Mammary epithelial cell (primary cell): ENCODE measurements at regions of chr9 and their contacts with region 1.

Region 1: GRCh38 chr9:84697509-84698114 is 28.1 kb downstream of the NTRK2 start:
- DNase-seq: peak; percentile 51
- H3K4me3 ChIP-seq: no peak overlapping the region
- H3K27ac ChIP-seq: no peak overlapping the region
- H3K4me1 ChIP-seq: peaks cover 4% of the 10 kb centered on the region
- H3K27me3 ChIP-seq: peaks cover 1% of the 10 kb centered on the region
- CTCF ChIP-seq: peak; percentile 78 to 94

Region 2: DNA sequence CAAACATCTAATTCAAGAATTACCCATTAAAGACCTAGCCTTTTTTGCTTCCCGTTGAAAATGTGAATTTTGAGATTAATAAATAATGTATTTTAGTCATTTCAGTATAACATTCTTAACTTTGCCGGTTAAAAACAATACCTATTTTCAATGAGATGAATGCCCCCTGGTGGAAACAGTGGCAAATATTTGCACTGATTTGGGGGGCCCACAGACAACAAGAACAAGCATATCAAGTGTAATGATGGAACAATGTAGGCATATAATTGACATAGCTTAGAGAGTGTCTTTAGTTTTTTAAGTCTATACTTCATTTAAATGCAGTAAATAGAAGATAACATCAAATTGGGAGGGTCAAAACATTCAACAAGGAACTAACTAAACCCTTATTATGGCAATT is 83.8 kb after region 1 on chr9:
- CTCF ChIA-PET with region 1: interaction called, 10 read pairs
- dilution Hi-C with region 1: loop called (anchors 5 kb)
- in situ Hi-C with region 1: loop called in 1 of 2 experiments (anchors 5 kb)
- intact Hi-C with region 1: loop called (anchors 1 kb)
- DNase-seq: peak; percentile 13
- H3K4me3 ChIP-seq: no peak overlapping the region
- H3K27ac ChIP-seq: no peak overlapping the region
- H3K4me1 ChIP-seq: no peaks in the 10 kb centered on the region
- H3K27me3 ChIP-seq: no peaks in the 10 kb centered on the region
- CTCF ChIP-seq: peak; percentile 55

Region 3: GRCh38 chr9:84947363-84947972 is 249.9 kb after region 1 on chr9:
- CTCF ChIA-PET with region 1: no interaction called
- dilution Hi-C with region 1: no loop called
- in situ Hi-C with region 1: loop called (anchors 5 to 10 kb)
- intact Hi-C with region 1: no loop called
- DNase-seq: peak; percentile 81
- H3K4me3 ChIP-seq: no peak overlapping the region
- H3K27ac ChIP-seq: peak overlapping the region; percentile 38
- H3K4me1 ChIP-seq: peaks cover 17% of the 10 kb centered on the region
- H3K27me3 ChIP-seq: no peaks in the 10 kb centered on the region
- CTCF ChIP-seq: no peak

Region 4: DNA sequence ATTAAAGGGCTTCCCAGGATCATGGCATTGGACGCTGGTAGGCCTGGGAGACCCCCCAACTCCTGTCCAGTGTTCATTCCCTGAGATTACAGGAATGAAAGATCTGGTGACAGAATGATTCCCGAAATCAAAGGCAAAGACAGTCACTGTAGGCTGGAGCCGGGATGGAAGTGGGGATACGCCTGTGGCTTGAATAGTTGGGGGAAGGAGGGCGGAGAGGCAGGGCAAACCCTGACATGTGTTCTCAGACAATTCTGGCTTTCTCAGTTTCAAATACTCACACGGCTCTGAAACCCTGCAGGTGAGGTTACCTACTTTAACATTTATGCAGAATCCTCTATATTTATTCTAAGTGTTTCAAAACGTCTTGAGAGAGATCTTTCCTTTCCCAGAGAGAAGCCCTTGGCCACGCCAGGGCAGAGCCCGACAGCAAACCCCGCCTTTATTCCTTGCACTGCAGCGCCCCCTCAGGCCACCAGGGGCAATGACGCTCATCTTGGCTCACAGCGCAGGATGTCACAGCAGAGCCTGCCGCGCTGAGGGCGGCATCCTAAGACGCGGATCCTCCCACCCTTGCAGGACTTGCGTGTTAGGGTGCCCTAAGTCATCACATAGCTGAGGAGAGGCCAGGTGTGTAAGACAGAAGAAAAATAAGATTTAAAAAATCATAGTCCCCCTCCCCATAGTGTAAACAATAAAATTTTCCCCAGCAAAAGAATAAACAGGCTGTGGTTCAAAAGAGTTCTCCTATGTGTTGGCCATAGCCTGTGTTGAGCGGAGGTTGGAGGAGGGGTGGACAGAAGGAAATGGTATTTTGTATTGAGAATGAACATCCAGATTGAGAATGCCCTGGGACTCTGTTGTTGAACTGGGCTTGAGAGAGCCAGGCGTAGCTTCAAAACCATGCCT is 256.4 kb after region 1 on chr9:
- CTCF ChIA-PET with region 1: no interaction called
- dilution Hi-C with region 1: no loop called
- in situ Hi-C with region 1: loop called (anchors 5 to 10 kb)
- intact Hi-C with region 1: loop called (anchors 1 kb)
- DNase-seq: peak; percentile 73
- H3K4me3 ChIP-seq: no peak overlapping the region
- H3K27ac ChIP-seq: peak overlapping the region; percentile 67
- H3K4me1 ChIP-seq: peaks cover 14% of the 10 kb centered on the region
- H3K27me3 ChIP-seq: no peaks in the 10 kb centered on the region
- CTCF ChIP-seq: peak; percentile 99

Region 5: DNA sequence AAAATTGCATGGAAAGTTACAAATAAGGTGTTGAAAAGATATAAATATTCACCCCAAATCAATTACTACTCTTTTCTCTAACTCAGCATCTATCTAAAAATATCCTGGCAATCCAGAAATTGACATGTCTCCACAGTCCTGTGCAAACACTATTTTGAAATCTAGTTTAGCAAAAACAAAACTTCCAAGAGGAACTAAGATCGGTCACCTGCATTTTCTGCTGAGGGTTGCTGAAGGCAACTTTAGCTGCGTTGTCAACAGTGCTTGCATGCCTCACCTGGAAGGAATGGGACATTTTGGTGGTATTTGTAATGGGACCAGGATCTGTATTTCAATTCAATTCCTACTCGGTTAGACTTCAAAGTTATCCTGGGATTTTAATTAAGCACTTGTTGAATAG is 370.2 kb after region 1 on chr9:
- CTCF ChIA-PET with region 1: no interaction called
- dilution Hi-C with region 1: no loop called
- in situ Hi-C with region 1: no loop called
- intact Hi-C with region 1: loop called (anchors 2 kb)
- DNase-seq: no peak
- H3K4me3 ChIP-seq: no peak overlapping the region
- H3K27ac ChIP-seq: no peak overlapping the region
- H3K4me1 ChIP-seq: no peaks in the 10 kb centered on the region
- H3K27me3 ChIP-seq: no peaks in the 10 kb centered on the region
- CTCF ChIP-seq: no peak

Region 6: DNA sequence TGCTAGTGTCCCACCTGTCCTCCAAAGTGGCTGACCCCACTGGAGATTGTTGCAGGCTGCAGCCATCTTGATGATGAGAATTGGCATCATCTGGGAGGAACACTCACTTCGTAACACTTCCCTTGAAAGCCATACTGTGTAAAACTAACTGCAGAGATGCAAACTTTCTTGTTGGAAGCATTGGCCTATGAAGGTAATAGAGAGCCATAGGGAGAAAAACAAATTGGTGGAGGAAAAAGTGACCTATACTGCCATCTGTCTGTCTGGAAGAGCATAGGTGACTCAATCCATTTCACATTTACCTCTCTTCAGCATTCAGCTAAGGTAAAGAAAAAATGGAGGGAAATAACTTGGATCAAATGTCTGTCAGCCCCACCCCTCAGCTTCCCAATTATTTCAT is 445.4 kb after region 1 on chr9:
- CTCF ChIA-PET with region 1: no interaction called
- dilution Hi-C with region 1: no loop called
- in situ Hi-C with region 1: loop called in 1 of 2 experiments (anchors 25 kb)
- intact Hi-C with region 1: loop called (anchors 1 kb)
- DNase-seq: peak; percentile 28
- H3K4me3 ChIP-seq: no peak overlapping the region
- H3K27ac ChIP-seq: no peak overlapping the region
- H3K4me1 ChIP-seq: no peaks in the 10 kb centered on the region
- H3K27me3 ChIP-seq: no peaks in the 10 kb centered on the region
- CTCF ChIP-seq: peak; percentile 69 to 70

Region 7: GRCh38 chr9:85425153-85425611 is 727.6 kb after region 1 on chr9:
- CTCF ChIA-PET with region 1: no interaction called
- dilution Hi-C with region 1: no loop called
- in situ Hi-C with region 1: no loop called
- intact Hi-C with region 1: loop called (anchors 10 kb)
- DNase-seq: peak; percentile 27
- H3K4me3 ChIP-seq: no peak overlapping the region
- H3K27ac ChIP-seq: no peak overlapping the region
- H3K4me1 ChIP-seq: no peaks in the 10 kb centered on the region
- H3K27me3 ChIP-seq: no peaks in the 10 kb centered on the region
- CTCF ChIP-seq: peak; percentile 62 to 79